ENCODE measurements at regions of chr11 and their contacts with region 1.

Region 1: DNA sequence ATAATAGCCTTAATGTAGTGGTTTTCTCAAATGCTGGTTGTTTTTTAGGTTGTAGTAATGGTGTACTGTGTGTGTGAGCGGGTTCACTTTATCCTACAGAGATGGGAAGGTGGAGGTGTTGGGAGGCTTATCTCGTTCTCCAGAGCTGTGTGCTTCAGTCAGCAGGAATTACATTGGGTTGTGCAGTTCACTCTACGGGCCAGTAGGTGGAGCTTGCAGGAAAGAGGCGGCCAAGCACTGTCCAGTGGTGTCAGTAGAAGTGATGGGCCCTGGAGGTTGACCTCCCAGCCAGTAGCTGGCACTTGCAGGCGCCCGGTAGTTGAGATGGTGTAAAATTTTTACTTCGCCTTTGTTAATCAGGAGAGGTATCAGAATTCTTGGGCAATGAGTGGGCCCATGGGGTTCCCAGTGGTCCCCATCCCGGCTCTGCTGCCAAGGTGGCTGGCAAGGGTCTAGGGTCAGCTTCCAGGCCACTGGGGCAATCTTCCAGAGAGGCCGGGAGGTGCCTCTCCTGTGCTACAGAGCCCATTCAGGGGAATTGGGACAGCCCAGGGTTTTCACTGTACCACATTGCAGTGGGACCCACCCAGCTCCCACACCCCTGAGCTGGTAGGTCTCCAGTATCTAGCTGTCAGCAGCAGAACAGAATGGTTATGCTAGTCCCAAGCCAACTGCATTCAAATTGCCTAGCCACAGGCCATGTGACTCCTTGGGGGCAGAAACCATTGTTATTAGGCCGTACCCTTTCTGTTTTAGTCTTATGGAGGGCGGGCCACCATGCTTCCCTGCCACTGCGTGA is 43.9 kb downstream of the BIRC2 start:
- DNase-seq: peak; percentile 42
- ATAC-seq: peak; percentile 92
- H3K4me3 ChIP-seq: no peak overlapping the region
- H3K27ac ChIP-seq: no peak overlapping the region
- H3K4me1 ChIP-seq: no peaks in the 10 kb centered on the region; a peak in 1 of 4 replicates
- H3K27me3 ChIP-seq: no peaks in the 10 kb centered on the region
- CTCF ChIP-seq: peak; percentile 69 to 87 (median 83)
- POLR2A ChIP-seq: no peak
- RAD21 ChIP-seq: peak; percentile 71

Region 2: GRCh38 chr11:102197670-102198139 is 193.2 kb before region 1 on chr11:
- CTCF ChIA-PET with region 1: no interaction called
- POLR2A ChIA-PET with region 1: no interaction called
- RAD21 ChIA-PET with region 1: no interaction called
- intact Hi-C with region 1: no loop called
- DNase-seq: no peak
- ATAC-seq: no peak
- H3K4me3 ChIP-seq: no peak overlapping the region
- H3K27ac ChIP-seq: 0 out of 2 replicates have a peak overlapping the region, but pooled peaks have one; percentile 16
- H3K4me1 ChIP-seq: peaks cover 2 to 14% of the 10 kb centered on the region in 2 experiments; a peak in 3 of 4 replicates
- H3K27me3 ChIP-seq: no peaks in the 10 kb centered on the region
- CTCF ChIP-seq: no peak
- POLR2A ChIP-seq: no peak
- RAD21 ChIP-seq: no peak

Region 3: DNA sequence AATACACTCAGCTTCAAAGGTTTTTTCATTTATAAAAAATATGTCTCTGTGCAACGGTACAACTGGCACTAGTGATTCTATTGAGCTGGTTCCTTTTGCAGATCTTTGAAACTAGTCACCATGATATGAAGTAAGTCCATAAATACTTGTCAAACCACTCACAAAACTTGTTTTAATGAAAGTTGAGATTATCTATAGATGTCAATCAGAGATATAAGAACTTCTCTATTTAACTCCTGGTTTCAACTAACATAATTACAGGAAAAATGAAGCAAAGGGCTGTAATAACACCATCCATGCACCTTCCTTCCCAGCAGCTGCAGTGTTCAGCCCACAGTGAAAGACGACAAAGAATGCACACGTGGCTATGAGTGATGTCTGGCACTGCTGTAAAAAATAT is 17.0 kb after region 1 on chr11:
- CTCF ChIA-PET with region 1: interaction called, 11 read pairs
- POLR2A ChIA-PET with region 1: no interaction called
- RAD21 ChIA-PET with region 1: no interaction called
- intact Hi-C with region 1: no loop called
- DNase-seq: no peak
- ATAC-seq: no peak
- H3K4me3 ChIP-seq: no peak overlapping the region
- H3K27ac ChIP-seq: no peak overlapping the region
- H3K4me1 ChIP-seq: peaks cover 0 to 18% of the 10 kb centered on the region in 2 experiments; a peak in 2 of 4 replicates
- H3K27me3 ChIP-seq: no peaks in the 10 kb centered on the region
- CTCF ChIP-seq: no peak
- POLR2A ChIP-seq: no peak
- RAD21 ChIP-seq: no peak

Region 4: GRCh38 chr11:102495161-102496042 is 104.5 kb after region 1 on chr11:
- CTCF ChIA-PET with region 1: interaction called, 9 read pairs
- POLR2A ChIA-PET with region 1: no interaction called
- RAD21 ChIA-PET with region 1: no interaction called
- intact Hi-C with region 1: loop called (anchors 1 kb)
- DNase-seq: peak; percentile 81
- ATAC-seq: peak; percentile 81
- H3K4me3 ChIP-seq: peak overlapping the region; percentile 20 to 38
- H3K27ac ChIP-seq: no peak overlapping the region
- H3K4me1 ChIP-seq: peaks cover 13 to 35% of the 10 kb centered on the region in 2 experiments
- H3K27me3 ChIP-seq: no peaks in the 10 kb centered on the region
- CTCF ChIP-seq: peak; percentile 52 to 88 (median 79)
- POLR2A ChIP-seq: no peak
- RAD21 ChIP-seq: peak; percentile 95